Aorta (tissue), 5 donors: ENCODE measurements at regions of chr13 and their contacts with region 1.

Region 1: GRCh38 chr13:97781891-97782305 is 171.6 kb upstream of the IPO5 start:
- DNase-seq: peak in 1 of 2 donors; percentile 73
- ATAC-seq: peak; percentile 82
- H3K4me3 ChIP-seq: no peak overlapping the region
- H3K27ac ChIP-seq: peak overlapping the region; percentile 89 to 97
- H3K4me1 ChIP-seq: peaks cover 2 to 5% of the 10 kb centered on the region in 2 donors
- H3K27me3 ChIP-seq: no peaks in the 10 kb centered on the region

Region 2: DNA sequence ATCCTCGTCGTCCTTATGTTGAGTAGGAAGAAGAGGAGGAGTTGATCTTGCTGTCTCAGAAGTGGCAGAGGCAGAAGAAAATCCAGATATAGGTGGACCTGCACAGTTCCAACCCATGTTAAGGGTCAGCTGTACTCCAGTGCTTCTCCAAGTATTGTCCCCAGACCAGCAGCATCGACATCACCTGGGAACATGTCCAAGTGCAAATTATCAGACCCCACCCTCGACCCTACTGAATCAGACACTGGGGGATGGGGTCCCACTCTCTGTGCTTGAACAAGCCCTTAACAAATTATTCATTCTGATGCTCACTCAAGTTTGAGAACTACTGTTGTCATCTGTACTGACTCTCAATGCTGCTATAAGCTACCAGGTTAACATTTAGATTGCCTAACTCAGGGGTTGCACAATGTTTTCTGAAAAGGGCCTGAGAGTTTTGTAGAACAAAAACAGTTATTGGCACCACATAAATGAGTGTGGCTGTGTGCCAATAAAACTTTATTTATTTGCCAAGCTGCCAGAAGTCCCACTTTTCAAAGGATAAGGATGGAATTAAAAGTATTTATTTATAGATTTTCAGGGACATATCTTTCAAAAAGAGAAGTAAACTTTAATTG is 55.1 kb before region 1 on chr13:
- intact Hi-C with region 1: loop called in 1 of 2 experiments (anchors 10 kb)
- DNase-seq: no peak
- ATAC-seq: peak; percentile 66
- H3K4me3 ChIP-seq: no peak overlapping the region
- H3K27ac ChIP-seq: peak overlapping the region in 1 of 2 donors; percentile 38
- H3K4me1 ChIP-seq: peaks cover 7 to 9% of the 10 kb centered on the region in 2 donors
- H3K27me3 ChIP-seq: no peaks in the 10 kb centered on the region